Ascending aorta (tissue), 2 donors: ENCODE measurements at regions of chr7 and their contacts with region 1.

Region 1: GRCh38 chr7:25851332-25852210 is 300.4 kb upstream of the NFE2L3 start:
- DNase-seq: peak; percentile 62 to 92
- H3K4me3 ChIP-seq: peak overlapping the region; percentile 27 to 53
- H3K27ac ChIP-seq: peak overlapping the region; percentile 65 to 76
- H3K4me1 ChIP-seq: peaks cover 27 to 54% of the 10 kb centered on the region in 2 donors
- H3K27me3 ChIP-seq: no peaks in the 10 kb centered on the region
- CTCF ChIP-seq: peak; percentile 85 to 89 (median 88)

Region 2: GRCh38 chr7:25179771-25180591 is 671.6 kb before region 1 on chr7:
- intact Hi-C with region 1: loop called (anchors 5 kb)
- DNase-seq: peak; percentile 58 to 97
- H3K4me3 ChIP-seq: peak overlapping the region; percentile 69 to 74
- H3K27ac ChIP-seq: peak overlapping the region; percentile 78 to 85
- H3K4me1 ChIP-seq: peaks cover 0 to 4% of the 10 kb centered on the region in 2 donors
- H3K27me3 ChIP-seq: no peaks in the 10 kb centered on the region
- CTCF ChIP-seq: peak; percentile 54 to 95 (median 87)

Region 3: DNA sequence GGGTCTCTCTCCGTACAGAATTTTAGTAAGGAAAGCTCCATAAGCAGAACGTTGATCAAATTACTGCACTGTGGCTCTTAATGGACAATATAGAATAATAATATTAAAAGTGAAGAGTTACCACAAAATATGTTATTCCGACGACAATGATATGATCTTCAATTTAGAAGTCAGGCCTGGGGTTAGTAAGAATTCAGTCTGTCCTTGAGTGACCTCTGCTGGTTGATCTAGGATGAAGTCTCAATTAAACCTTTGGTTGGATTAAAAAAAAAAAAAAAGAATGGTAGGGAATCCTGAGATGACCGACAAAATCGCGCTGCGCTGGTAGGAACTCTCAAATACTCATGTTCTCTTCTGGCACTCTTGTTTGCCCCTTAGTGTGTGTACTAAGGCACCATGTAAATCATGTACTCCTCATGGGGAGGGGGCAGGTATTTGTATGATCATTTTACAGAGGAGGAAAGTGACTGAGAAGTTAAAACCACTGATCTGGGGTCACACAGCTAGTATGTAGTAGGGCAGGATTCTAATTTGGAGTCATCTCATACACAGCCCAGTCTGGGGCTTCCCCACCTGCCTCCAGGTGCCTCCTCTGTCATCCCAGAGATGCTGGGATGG is 462.0 kb before region 1 on chr7:
- intact Hi-C with region 1: loop called (anchors 1 kb)
- DNase-seq: no peak
- H3K4me3 ChIP-seq: no peak overlapping the region
- H3K27ac ChIP-seq: no peak overlapping the region
- H3K4me1 ChIP-seq: peaks cover 0 to 8% of the 10 kb centered on the region in 2 donors
- H3K27me3 ChIP-seq: no peaks in the 10 kb centered on the region
- CTCF ChIP-seq: peak in 1 of 3 experiments; percentile 49

Region 4: DNA sequence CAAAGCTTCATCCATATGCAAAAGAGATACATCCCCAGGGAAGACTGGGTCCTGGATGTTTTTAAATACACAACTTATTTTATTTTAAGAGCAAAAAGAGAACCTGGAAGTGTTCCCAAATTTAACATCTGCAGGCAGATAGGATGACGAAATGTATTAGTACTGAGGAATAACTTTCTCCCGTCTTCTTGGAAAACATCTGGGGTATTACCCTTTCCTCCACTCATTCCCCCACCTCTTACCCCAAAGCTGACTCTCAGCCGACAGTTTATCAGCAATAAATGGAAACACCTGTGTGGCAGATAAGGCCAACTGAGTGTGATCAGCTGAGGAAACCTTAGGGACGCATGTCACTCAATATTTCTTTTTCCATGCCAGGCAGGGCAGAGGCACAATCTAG is 187.7 kb before region 1 on chr7:
- intact Hi-C with region 1: loop called (anchors 5 kb)
- DNase-seq: no peak
- H3K4me3 ChIP-seq: no peak overlapping the region
- H3K27ac ChIP-seq: no peak overlapping the region
- H3K4me1 ChIP-seq: peaks cover 0 to 6% of the 10 kb centered on the region in 2 donors
- H3K27me3 ChIP-seq: no peaks in the 10 kb centered on the region
- CTCF ChIP-seq: no peak

Region 5: DNA sequence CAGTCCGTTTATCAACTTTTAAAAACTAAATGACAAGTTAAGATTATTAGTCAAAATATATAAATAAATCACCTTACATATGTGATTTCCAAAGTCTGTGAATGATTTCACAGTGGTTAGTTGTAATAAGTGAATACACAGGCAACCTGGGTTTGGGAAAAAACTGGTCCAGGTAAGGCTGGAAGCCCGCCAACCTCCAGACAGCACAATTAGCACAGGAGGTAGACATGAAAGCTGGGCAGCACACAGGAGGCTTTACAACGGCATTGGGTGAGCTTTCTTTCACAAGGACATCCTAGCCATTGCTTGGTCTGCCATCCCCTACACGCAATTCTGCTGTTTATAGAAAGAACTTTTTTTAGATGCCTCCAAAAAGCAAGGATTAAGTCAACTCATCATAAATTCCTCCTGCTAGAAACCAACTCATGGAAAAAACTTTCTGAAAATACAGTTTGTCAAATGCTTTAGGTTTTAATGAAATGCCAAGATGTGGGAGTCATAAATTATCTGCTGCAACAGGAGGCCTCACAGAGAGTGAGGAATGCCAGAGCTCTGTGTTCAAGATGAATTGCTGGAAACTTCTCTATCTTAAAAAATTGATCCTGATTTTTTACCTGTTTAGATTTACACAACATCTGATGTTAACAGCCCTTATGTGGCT is 46.4 kb before region 1 on chr7:
- intact Hi-C with region 1: loop called (anchors 2 kb)
- DNase-seq: no peak
- H3K4me3 ChIP-seq: no peak overlapping the region
- H3K27ac ChIP-seq: peak overlapping the region; percentile 19 to 59
- H3K4me1 ChIP-seq: peaks cover 0 to 36% of the 10 kb centered on the region in 2 donors
- H3K27me3 ChIP-seq: no peaks in the 10 kb centered on the region
- CTCF ChIP-seq: no peak

Region 6: GRCh38 chr7:26864309-26865093 is 1012.9 kb after region 1 on chr7 and contains the start of gene SKAP2:
- intact Hi-C with region 1: loop called (anchors 5 kb)
- DNase-seq: peak; percentile 92 to 99
- H3K4me3 ChIP-seq: peak within 1 kb of the TSS; percentile 66 to 89
- H3K27ac ChIP-seq: peak within 1 kb of the TSS; percentile 87 to 90
- H3K4me1 ChIP-seq: no peaks in the 10 kb centered on the region
- H3K27me3 ChIP-seq: no peaks in the 10 kb centered on the region
- CTCF ChIP-seq: peak in 1 of 3 experiments; percentile 11
- total RNA-seq, gene SKAP2: 50.2 TPM

Region 7: GRCh38 chr7:27160546-27161213 is 1309.1 kb after region 1 on chr7:
- intact Hi-C with region 1: loop called (anchors 5 kb)
- DNase-seq: peak in 1 of 2 donors; percentile 93
- H3K4me3 ChIP-seq: peak overlapping the region; percentile 47 to 72
- H3K27ac ChIP-seq: peak overlapping the region in 1 of 2 donors; percentile 51
- H3K4me1 ChIP-seq: no peaks in the 10 kb centered on the region
- H3K27me3 ChIP-seq: peaks cover 11% of the 10 kb centered on the region
- CTCF ChIP-seq: peak; percentile 97 to 100 (median 99)